ENCODE measurements at regions of chr2 and their contacts with region 1.

Region 1: GRCh38 chr2:120693121-120693520 is 42.5 kb upstream of the GLI2 start:
- DNase-seq: no peak
- ATAC-seq: no peak
- H3K4me3 ChIP-seq: no peak overlapping the region
- H3K4me3 Mint-ChIP-seq: no peak overlapping the region
- H3K27ac ChIP-seq: no peak overlapping the region
- H3K27ac Mint-ChIP-seq: no peak overlapping the region
- H3K4me1 ChIP-seq: no peaks in the 10 kb centered on the region
- H3K4me1 Mint-ChIP-seq: peaks cover 4 to 6% (median 5%) of the 10 kb centered on the region in 7 donors
- H3K27me3 ChIP-seq: peaks cover 0 to 7% of the 10 kb centered on the region in 2 donors
- H3K27me3 Mint-ChIP-seq: peaks cover 31 to 64% (median 38%) of the 10 kb centered on the region in 5 donors

Region 2: GRCh38 chr2:120809609-120810440 is 116.7 kb after region 1 on chr2:
- CTCF ChIA-PET with region 1: no interaction called
- POLR2A ChIA-PET with region 1: no interaction called
- intact Hi-C with region 1: no loop called
- DNase-seq: no peak
- ATAC-seq: no peak
- H3K4me3 ChIP-seq: no peak overlapping the region
- H3K4me3 Mint-ChIP-seq: no peak overlapping the region
- H3K27ac ChIP-seq: no peak overlapping the region
- H3K27ac Mint-ChIP-seq: no peak overlapping the region
- H3K4me1 ChIP-seq: no peaks in the 10 kb centered on the region
- H3K4me1 Mint-ChIP-seq: peaks cover 0 to 2% (median 0%) of the 10 kb centered on the region in 7 donors
- H3K27me3 ChIP-seq: no peaks in the 10 kb centered on the region
- H3K27me3 Mint-ChIP-seq: peaks cover 0 to 42% (median 8%) of the 10 kb centered on the region in 5 donors

Region 3: GRCh38 chr2:120856421-120856862 is 163.3 kb after region 1 on chr2:
- CTCF ChIA-PET with region 1: no interaction called
- POLR2A ChIA-PET with region 1: no interaction called
- intact Hi-C with region 1: no loop called
- DNase-seq: no peak
- ATAC-seq: no peak
- H3K4me3 ChIP-seq: no peak overlapping the region
- H3K4me3 Mint-ChIP-seq: no peak overlapping the region
- H3K27ac ChIP-seq: no peak overlapping the region
- H3K27ac Mint-ChIP-seq: no peak overlapping the region
- H3K4me1 ChIP-seq: no peaks in the 10 kb centered on the region
- H3K4me1 Mint-ChIP-seq: no peaks in the 10 kb centered on the region
- H3K27me3 ChIP-seq: no peaks in the 10 kb centered on the region
- H3K27me3 Mint-ChIP-seq: peaks cover 0 to 8% (median 0%) of the 10 kb centered on the region in 5 donors

Region 4: DNA sequence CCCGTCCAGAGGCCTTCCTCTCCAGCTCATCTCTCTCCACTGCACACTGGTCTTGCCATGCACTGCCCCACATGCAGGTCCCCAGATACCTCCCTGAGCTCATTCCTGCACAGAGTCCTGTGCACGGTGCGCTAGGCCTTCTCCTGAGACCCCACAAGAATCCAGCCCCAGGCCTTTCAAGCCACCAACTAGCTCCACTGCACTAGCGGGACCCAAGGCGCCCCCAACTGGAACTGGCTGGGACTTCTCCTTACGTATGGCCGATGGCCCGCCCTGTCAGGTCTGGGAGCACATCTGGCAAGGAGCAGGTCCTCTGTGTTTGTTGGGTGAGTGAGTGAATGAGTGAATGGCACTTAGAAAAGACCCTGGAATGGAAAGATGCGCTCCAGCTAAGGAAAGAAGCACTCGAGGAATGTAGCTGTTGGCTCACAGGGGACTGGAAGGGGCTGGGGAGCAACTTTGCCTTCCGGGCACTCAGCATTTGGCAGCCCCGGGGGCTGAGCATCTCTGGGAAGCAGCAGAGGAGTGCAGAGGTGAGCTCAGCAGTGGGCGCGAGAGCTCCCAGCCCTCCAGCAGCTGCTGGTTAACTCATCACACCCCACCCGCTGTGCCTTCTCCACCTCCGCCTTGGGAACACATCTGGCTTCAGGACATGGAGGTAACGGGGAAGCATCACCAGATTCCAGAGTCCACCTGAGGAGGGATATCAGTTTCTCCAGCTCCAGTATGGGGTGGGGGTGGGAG is 265.7 kb after region 1 on chr2:
- CTCF ChIA-PET with region 1: no interaction called
- POLR2A ChIA-PET with region 1: no interaction called
- intact Hi-C with region 1: loop called in 1 of 2 experiments (anchors 10 kb)
- DNase-seq: no peak
- ATAC-seq: no peak
- H3K4me3 ChIP-seq: no peak overlapping the region
- H3K4me3 Mint-ChIP-seq: no peak overlapping the region
- H3K27ac ChIP-seq: no peak overlapping the region
- H3K27ac Mint-ChIP-seq: no peak overlapping the region
- H3K4me1 ChIP-seq: no peaks in the 10 kb centered on the region
- H3K4me1 Mint-ChIP-seq: peaks cover 0 to 2% (median 0%) of the 10 kb centered on the region in 7 donors
- H3K27me3 ChIP-seq: no peaks in the 10 kb centered on the region
- H3K27me3 Mint-ChIP-seq: peaks cover 0 to 4% (median 0%) of the 10 kb centered on the region in 5 donors

Region 5: DNA sequence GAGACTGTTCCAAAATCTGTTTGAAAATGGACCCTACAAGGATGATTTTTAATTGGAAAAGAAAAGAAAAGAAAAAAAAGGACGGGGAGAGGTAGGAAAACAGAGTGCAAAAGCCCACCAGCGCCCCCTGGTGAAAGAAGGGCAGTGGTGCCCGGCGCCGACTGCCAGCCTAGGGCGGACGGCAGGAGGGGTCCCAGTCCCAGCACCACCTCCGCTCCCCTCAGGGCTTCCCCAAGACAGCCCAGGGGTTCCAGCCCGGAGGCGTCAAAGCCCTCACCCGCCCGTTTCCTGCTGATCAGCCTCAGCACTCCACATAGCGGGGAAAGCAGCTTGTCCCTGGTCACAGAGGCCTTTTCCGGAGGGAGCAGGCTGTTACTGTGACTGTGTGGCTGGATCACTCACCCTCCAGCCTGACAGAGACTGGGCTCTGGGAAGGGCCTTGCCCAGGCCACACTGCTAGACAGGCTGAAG is 377.9 kb after region 1 on chr2:
- CTCF ChIA-PET with region 1: interaction called, 3 read pairs
- POLR2A ChIA-PET with region 1: no interaction called
- intact Hi-C with region 1: loop called in 1 of 2 experiments (anchors 1 kb)
- DNase-seq: peak in 1 of 9 donors; percentile 57
- ATAC-seq: peak; percentile 30
- H3K4me3 ChIP-seq: no peak overlapping the region
- H3K4me3 Mint-ChIP-seq: no peak overlapping the region
- H3K27ac ChIP-seq: no peak overlapping the region
- H3K27ac Mint-ChIP-seq: no peak overlapping the region
- H3K4me1 ChIP-seq: no peaks in the 10 kb centered on the region
- H3K4me1 Mint-ChIP-seq: peaks cover 0 to 3% (median 0%) of the 10 kb centered on the region in 7 donors
- H3K27me3 ChIP-seq: peaks cover 0 to 4% of the 10 kb centered on the region in 2 donors
- H3K27me3 Mint-ChIP-seq: peaks cover 10 to 25% (median 14%) of the 10 kb centered on the region in 5 donors